ENCODE measurements at regions of chr14 and their contacts with region 1.

Region 1: DNA sequence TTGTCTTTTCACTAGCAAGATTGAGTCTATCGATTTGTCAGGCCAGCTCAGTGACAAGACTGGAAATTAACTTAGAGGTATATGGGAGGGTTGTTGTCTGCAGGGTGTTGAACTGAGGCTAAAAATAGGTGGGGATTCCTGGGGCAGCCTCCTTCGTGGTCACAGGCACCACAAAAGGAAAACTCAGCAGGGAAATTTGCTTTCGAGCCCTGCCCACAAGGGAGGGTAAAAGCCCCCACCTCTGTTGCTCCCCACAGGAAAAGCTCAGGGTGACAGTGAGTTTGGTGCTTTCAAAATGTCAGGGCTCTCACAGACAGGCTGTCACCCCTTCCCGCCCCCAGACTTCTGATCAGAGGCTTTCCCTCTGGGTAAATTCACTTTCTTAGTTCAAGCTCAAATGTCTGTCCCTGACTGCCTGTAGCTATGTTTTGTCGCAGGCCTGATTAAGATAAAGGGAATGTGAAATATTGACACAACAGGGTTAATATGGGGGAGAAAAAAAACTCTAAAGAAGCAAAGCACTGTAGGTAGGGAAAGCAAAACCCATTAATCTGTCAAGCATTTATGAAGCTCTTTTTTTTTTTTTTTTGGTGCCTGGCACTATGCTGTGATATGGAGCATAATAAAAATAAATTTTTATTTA is 11.7 kb upstream of the NFKBIA start:
- DNase-seq: peak; percentile 89
- H3K4me3 Mint-ChIP-seq: peak overlapping the region; percentile 70
- H3K27ac Mint-ChIP-seq: peak overlapping the region; percentile 92
- H3K4me1 Mint-ChIP-seq: peaks cover 41% of the 10 kb centered on the region
- H3K27me3 Mint-ChIP-seq: no peaks in the 10 kb centered on the region

Region 2: GRCh38 chr14:34665785-34666435 is 750.3 kb before region 1 on chr14:
- CTCF ChIA-PET with region 1: interaction called, 5 read pairs
- POLR2A ChIA-PET with region 1: no interaction called
- intact Hi-C with region 1: loop called (anchors 2 kb)
- DNase-seq: peak; percentile 32
- H3K4me3 Mint-ChIP-seq: peak overlapping the region; percentile 18
- H3K27ac Mint-ChIP-seq: peak overlapping the region; percentile 86
- H3K4me1 Mint-ChIP-seq: peaks cover 15% of the 10 kb centered on the region
- H3K27me3 Mint-ChIP-seq: no peaks in the 10 kb centered on the region

Region 3: GRCh38 chr14:34875031-34875922 is 541.0 kb before region 1 on chr14 and contains the start of gene BAZ1A:
- CTCF ChIA-PET with region 1: no interaction called
- POLR2A ChIA-PET with region 1: no interaction called
- intact Hi-C with region 1: loop called (anchors 2 kb)
- DNase-seq: peak; percentile 52
- H3K4me3 Mint-ChIP-seq: peak within 1 kb of the TSS; percentile 100
- H3K27ac Mint-ChIP-seq: peak within 1 kb of the TSS; percentile 98
- H3K4me1 Mint-ChIP-seq: peaks cover 33% of the 10 kb centered on the region
- H3K27me3 Mint-ChIP-seq: no peaks in the 10 kb centered on the region
- total RNA-seq, gene BAZ1A: 67.8 to 68.0 TPM

Region 4: DNA sequence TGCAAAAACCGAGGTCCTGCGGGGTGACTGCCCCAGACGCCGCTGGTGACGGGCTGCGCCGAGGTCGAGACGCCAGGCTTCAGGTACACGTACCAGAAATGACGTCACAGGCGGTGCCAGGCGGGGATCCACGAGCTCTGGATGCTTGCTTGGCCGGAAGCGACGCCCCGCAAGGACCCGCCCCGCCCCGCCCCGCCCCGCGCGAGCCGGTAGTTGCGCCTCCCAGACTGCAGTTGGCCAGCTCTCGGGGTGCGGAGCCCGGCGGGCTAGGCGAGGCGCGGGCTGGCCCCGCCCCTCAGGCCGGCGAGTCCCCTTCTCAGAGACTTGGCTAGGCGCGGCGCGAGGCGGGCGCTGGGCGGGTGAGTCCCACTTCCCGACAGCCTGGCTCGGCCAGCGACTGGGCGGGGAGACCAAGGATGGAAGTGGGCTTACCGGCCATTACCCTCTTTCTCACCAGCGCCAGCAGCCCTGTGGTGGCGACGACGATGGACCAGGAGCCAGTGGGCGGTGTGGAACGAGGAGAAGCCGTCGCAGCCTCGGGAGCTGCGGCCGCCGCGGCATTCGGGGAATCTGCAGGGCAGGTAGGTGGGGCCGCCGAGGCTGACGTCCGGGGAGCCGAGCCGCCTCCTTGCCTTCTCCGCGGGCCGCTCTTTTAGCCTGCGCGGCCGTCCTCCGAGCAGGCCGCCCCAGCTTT is 370.0 kb before region 1 on chr14 and contains the start of gene FAM177A1:
- CTCF ChIA-PET with region 1: interaction called, 9 read pairs
- POLR2A ChIA-PET with region 1: interaction called, 17 read pairs
- intact Hi-C with region 1: loop called (anchors 1 kb)
- DNase-seq: peak; percentile 99
- H3K4me3 Mint-ChIP-seq: peak within 1 kb of the TSS; percentile 97
- H3K27ac Mint-ChIP-seq: peak within 1 kb of the TSS; percentile 98
- H3K4me1 Mint-ChIP-seq: peaks cover 28% of the 10 kb centered on the region
- H3K27me3 Mint-ChIP-seq: no peaks in the 10 kb centered on the region
- total RNA-seq, gene FAM177A1: 48.8 to 56.8 TPM

Region 5: GRCh38 chr14:35215110-35215876 is 200.9 kb before region 1 on chr14:
- CTCF ChIA-PET with region 1: interaction called, 17 read pairs
- POLR2A ChIA-PET with region 1: no interaction called
- intact Hi-C with region 1: no loop called
- DNase-seq: no peak
- H3K4me3 Mint-ChIP-seq: no peak overlapping the region
- H3K27ac Mint-ChIP-seq: no peak overlapping the region
- H3K4me1 Mint-ChIP-seq: peaks cover 20% of the 10 kb centered on the region
- H3K27me3 Mint-ChIP-seq: no peaks in the 10 kb centered on the region

Region 6: DNA sequence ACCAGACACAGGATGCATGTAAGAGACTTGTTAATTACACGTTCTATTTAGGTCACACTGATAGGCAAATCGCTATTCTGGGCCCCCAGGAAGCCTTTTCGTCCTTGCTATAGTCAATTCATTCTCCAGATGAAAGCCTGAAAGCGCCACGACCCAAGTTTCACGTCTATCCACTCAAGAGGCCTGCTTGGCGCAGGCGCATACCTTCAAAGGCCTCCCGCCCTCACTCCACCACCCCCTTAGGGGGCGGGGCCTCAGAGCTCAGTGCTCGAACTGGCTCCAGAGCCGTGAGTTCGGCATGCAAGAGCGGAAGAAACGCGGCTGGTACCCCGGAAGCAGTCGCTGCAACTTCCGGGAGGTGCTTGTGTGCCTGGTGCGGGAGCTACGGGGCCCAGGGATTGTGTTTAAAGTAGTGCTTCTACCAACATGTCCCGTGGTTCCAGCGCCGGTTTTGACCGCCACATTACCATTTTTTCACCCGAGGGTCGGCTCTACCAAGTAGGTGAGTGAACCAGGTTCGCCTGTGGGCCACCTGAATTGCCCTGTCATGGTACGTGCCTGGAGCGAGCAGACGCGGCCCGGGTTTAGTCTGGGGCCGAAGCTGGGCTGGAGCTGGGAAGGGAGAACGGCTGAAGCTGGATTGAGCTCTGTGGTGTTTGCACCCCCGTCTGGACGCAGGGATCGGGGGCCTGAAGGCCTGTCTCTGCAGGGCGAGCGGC is 124.0 kb before region 1 on chr14 and contains the start of gene PSMA6:
- CTCF ChIA-PET with region 1: interaction called, 11 read pairs
- POLR2A ChIA-PET with region 1: interaction called, 23 read pairs
- intact Hi-C with region 1: loop called (anchors 1 kb)
- DNase-seq: peak; percentile 100
- H3K4me3 Mint-ChIP-seq: peak within 1 kb of the TSS; percentile 99
- H3K27ac Mint-ChIP-seq: peak within 1 kb of the TSS; percentile 97
- H3K4me1 Mint-ChIP-seq: peaks cover 50% of the 10 kb centered on the region
- H3K27me3 Mint-ChIP-seq: no peaks in the 10 kb centered on the region
- total RNA-seq, gene PSMA6: 407 to 425 TPM

Region 7: GRCh38 chr14:35480128-35480769 is 64.0 kb after region 1 on chr14:
- CTCF ChIA-PET with region 1: no interaction called
- POLR2A ChIA-PET with region 1: no interaction called
- intact Hi-C with region 1: no loop called
- DNase-seq: no peak
- H3K4me3 Mint-ChIP-seq: no peak overlapping the region
- H3K27ac Mint-ChIP-seq: no peak overlapping the region
- H3K4me1 Mint-ChIP-seq: peaks cover 7% of the 10 kb centered on the region
- H3K27me3 Mint-ChIP-seq: peaks cover 13% of the 10 kb centered on the region

Measured in activated CD4-positive, alpha-beta memory T cell treated with anti-CD3 and anti-CD28 coated beads for 36 hours (primary cell).